ENCODE measurements at regions of chr9 and their contacts with region 1.

Region 1: GRCh38 chr9:9054354-9054992 is 1254.9 kb upstream of the DMAC1 start:
- DNase-seq: no peak
- H3K4me3 ChIP-seq: no peak overlapping the region
- H3K27ac ChIP-seq: no peak overlapping the region
- H3K4me1 ChIP-seq: no peaks in the 10 kb centered on the region
- H3K27me3 ChIP-seq: no peaks in the 10 kb centered on the region
- CTCF ChIP-seq: no peak
- POLR2A ChIP-seq: no peak

Region 2: DNA sequence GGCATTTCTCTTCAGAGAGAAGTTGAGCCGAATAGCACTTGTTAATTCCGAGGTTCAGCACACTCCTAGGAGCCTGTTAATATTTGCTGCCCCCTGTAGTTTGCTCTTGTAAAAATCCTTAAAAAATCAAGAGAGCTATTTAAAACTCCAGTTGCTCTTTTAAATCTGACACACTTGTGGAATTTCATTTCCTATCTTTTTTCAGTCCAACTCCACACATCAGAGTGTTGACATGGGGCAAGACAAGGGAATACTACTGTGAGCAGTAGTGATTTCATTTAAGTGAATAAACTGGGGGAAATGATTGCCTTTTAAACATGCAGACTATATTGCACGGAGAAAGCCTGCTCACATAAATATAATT is 158.6 kb before region 1 on chr9:
- intact Hi-C with region 1: no loop called
- DNase-seq: no peak
- H3K4me3 ChIP-seq: no peak overlapping the region
- H3K27ac ChIP-seq: no peak overlapping the region
- H3K4me1 ChIP-seq: peaks cover 0 to 4% (median 0%) of the 10 kb centered on the region in 6 donors
- H3K27me3 ChIP-seq: no peaks in the 10 kb centered on the region
- CTCF ChIP-seq: peak in 6 of 11 experiments; percentile 22 to 45 (median 34)
- POLR2A ChIP-seq: no peak

Region 3: GRCh38 chr9:9002826-9003583 is 51.5 kb before region 1 on chr9:
- intact Hi-C with region 1: loop called (anchors 10 kb)
- DNase-seq: no peak
- H3K4me3 ChIP-seq: no peak overlapping the region
- H3K27ac ChIP-seq: no peak overlapping the region
- H3K4me1 ChIP-seq: no peaks in the 10 kb centered on the region
- H3K27me3 ChIP-seq: no peaks in the 10 kb centered on the region
- CTCF ChIP-seq: no peak
- POLR2A ChIP-seq: no peak

Measured in spleen (tissue), 13 donors.